ENCODE measurements at regions of chr5 and their contacts with region 1.

Region 1: DNA sequence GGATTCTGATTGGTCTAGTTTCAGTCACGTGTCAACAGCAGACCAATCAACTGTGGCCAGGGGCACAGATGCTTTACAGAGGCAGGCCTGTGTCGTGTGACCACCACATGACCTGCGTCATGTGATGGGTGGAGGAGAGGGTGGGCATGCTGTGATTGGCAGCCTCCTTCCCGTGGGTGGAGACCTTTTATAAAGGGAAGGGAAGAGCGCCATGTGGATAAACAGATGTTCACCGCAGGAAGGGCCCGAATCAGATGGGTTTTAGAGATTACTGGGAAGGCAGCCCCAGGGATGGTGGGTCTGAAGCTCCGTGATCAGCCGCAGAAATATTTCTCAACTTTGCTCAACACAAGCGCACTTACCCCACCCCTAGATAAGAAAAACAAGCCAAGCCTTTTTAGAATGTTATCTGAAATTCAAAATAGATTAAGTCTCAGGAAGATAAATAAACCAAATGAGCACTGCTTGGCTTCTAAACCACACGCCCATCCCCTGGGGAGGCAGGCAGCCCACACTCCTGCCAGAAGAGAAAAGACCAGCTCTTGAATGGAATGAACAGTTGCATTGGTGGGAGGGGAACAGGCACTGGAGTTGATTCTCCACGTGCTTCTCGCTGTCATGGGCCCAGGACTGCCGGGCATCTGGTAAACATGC is 43.6 kb downstream of the ROPN1L start:
- DNase-seq: peak; percentile 96
- ATAC-seq: peak; percentile 89
- H3K4me3 ChIP-seq: no peak overlapping the region
- H3K27ac ChIP-seq: peak overlapping the region; percentile 80
- H3K4me1 ChIP-seq: peaks cover 19% of the 10 kb centered on the region
- H3K27me3 ChIP-seq: no peaks in the 10 kb centered on the region
- CTCF ChIP-seq: no peak
- POLR2A ChIP-seq: no peak
- RAD21 ChIP-seq: no peak

Region 2: GRCh38 chr5:9670371-9670770 is 814.9 kb before region 1 on chr5:
- CTCF ChIA-PET with region 1: no interaction called
- POLR2A ChIA-PET with region 1: no interaction called
- dilution Hi-C with region 1: no loop called
- in situ Hi-C with region 1: no loop called
- intact Hi-C with region 1: no loop called
- DNase-seq: no peak
- ATAC-seq: no peak
- H3K4me3 ChIP-seq: no peak overlapping the region
- H3K27ac ChIP-seq: no peak overlapping the region
- H3K4me1 ChIP-seq: no peaks in the 10 kb centered on the region
- H3K27me3 ChIP-seq: no peaks in the 10 kb centered on the region
- CTCF ChIP-seq: no peak
- POLR2A ChIP-seq: no peak
- RAD21 ChIP-seq: no peak

Region 3: DNA sequence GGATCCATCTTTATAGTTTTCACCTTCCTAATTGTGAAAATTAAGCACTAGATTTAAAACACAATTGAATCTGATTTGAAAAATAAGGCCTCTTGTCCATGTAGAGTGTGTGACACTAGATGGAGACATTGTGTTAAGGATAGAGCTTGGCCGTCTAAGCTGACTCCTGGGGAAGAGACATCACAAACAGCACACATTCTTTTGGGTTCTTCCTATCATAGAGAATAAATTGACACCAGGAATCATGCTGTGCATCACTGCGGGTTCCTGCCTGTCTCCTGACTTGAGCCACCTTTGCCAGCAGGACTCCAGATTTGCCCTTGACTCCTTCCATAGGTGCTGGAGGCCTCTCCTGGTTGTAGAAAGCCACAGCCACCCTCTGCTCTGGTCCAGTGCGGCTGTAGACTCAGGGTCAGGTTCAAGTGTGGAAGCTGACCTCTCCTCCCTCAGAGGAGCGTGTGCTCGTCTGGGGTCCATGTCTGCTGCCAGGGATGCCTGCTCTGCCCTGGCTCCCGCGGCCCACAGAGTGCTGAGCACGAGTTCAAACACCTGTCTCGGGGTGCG is 32.4 kb before region 1 on chr5:
- CTCF ChIA-PET with region 1: no interaction called
- POLR2A ChIA-PET with region 1: no interaction called
- dilution Hi-C with region 1: no loop called
- in situ Hi-C with region 1: no loop called
- intact Hi-C with region 1: no loop called
- DNase-seq: peak; percentile 95
- ATAC-seq: peak; percentile 80
- H3K4me3 ChIP-seq: no peak overlapping the region
- H3K27ac ChIP-seq: 0 out of 2 replicates have a peak overlapping the region, but pooled peaks have one; percentile 4
- H3K4me1 ChIP-seq: peaks cover 26% of the 10 kb centered on the region
- H3K27me3 ChIP-seq: no peaks in the 10 kb centered on the region
- CTCF ChIP-seq: peak; percentile 94
- POLR2A ChIP-seq: peak; percentile 41; the same call in 1 of the 2 replicates
- RAD21 ChIP-seq: peak; percentile 99

Region 4: DNA sequence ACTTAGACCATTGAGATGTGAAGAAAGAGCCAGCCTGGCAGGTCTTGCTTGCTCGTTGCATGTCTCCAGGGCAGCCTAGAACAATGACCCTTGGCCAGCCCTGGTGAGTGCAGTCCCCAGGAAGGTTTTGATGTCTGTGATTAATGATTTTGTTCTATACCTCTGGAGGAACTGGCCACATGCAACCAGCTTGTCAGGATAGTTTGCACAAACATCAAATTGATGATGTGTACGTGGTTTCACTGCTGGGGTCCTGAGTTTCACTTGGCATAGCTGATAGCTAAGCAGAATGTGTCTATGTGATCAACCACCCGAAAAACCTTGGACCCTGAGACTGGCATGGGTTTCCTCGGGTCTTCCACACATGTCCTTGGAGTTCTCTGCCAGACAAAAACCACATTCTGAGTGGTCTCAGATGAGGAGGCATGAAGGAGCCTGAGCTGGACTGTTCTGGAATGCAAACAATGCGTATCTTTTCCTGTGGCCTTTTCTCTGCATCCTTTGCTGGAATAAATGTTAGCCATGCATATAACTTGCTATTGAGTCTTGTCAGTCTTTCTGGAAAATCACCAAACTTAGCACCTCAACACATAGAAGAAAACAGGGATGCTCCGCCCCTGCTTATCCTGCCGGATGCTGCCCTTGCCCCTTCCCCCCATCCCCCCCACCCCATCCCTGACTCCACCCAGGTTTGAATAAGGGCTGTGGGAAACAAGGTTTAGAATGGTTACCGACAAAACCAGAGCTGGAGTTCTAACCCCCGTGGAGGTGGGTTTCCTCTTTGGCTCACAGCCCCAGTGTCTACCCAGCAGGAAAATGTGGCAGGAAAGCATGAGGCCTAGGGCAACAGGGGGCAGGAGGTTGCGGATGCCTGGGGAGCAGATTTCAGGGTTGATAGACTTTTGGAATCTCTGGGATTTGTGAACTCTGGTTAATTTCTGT is 28.5 kb after region 1 on chr5:
- CTCF ChIA-PET with region 1: no interaction called
- POLR2A ChIA-PET with region 1: no interaction called
- dilution Hi-C with region 1: no loop called
- in situ Hi-C with region 1: no loop called
- intact Hi-C with region 1: loop called (anchors 1 kb)
- DNase-seq: peak; percentile 83
- ATAC-seq: peak; percentile 95
- H3K4me3 ChIP-seq: no peak overlapping the region
- H3K27ac ChIP-seq: peak overlapping the region; percentile 74
- H3K4me1 ChIP-seq: peaks cover 10% of the 10 kb centered on the region
- H3K27me3 ChIP-seq: no peaks in the 10 kb centered on the region
- CTCF ChIP-seq: no peak
- POLR2A ChIP-seq: no peak
- RAD21 ChIP-seq: no peak

Region 5: GRCh38 chr5:10556893-10557746 is 71.9 kb after region 1 on chr5:
- CTCF ChIA-PET with region 1: no interaction called
- POLR2A ChIA-PET with region 1: no interaction called
- dilution Hi-C with region 1: no loop called
- in situ Hi-C with region 1: no loop called
- intact Hi-C with region 1: no loop called
- DNase-seq: no peak
- ATAC-seq: no peak
- H3K4me3 ChIP-seq: no peak overlapping the region
- H3K27ac ChIP-seq: peak overlapping the region; percentile 23; the same call in 1 of the 2 replicates
- H3K4me1 ChIP-seq: peaks cover 26% of the 10 kb centered on the region
- H3K27me3 ChIP-seq: no peaks in the 10 kb centered on the region
- CTCF ChIP-seq: no peak
- POLR2A ChIP-seq: no peak
- RAD21 ChIP-seq: no peak

Measured in IMR-90 (cell line).